HCT116 (cell line): ENCODE measurements at regions of chr2 and their contacts with region 1.

Region 1: DNA sequence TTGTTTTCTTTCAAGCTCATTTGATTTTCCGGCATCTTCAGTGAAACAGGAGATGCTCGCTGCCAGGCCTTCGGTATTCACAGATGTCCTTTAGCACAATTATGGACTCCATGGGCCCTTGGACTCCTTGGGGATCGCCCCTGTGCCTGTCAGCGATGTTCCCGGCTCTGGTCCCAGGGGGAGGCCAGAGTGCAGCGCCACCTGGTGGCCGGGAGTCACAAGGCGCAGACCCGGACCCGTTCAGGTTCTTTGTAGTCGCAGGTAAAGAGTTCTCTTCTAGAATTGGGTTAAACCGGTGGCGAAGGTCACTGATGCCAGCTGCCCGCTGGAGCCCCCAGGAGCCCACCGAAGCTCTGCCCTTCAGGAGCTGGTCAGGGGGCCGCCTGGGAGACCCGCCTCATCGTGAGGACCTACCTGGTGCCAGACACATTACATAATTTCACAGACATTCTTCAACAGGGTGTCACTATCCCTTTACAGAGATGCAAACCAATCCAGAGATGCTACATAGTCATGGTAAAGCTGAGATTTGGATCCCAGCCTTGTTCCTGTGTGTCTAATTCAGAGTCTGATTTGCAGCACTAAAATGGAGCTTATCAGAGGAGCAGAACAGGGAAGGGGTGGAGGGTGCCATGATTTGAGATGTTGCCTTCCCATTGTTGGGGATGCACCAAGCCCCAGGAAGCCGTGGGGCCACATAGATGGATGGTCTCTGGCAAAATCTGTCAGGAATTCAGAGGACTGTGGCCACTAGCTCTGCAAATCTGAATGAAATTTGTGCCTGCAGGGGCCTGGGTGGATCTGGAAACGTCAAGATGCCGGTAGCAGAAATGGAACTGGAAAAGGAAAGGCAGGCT is 6.0 kb upstream of the INPP5D start:
- DNase-seq: peak; percentile 48
- ATAC-seq: peak; percentile 98
- H3K4me3 ChIP-seq: no peak overlapping the region
- H3K27ac ChIP-seq: no peak overlapping the region
- H3K4me1 ChIP-seq: peaks cover 2 to 16% of the 10 kb centered on the region in 2 experiments; a peak in 2 of 4 replicates
- H3K27me3 ChIP-seq: no peaks in the 10 kb centered on the region; the same call in 1 of the 2 replicates
- CTCF ChIP-seq: peak; percentile 92 to 98 (median 96)
- POLR2A ChIP-seq: no peak
- RAD21 ChIP-seq: peak; percentile 93

Region 2: DNA sequence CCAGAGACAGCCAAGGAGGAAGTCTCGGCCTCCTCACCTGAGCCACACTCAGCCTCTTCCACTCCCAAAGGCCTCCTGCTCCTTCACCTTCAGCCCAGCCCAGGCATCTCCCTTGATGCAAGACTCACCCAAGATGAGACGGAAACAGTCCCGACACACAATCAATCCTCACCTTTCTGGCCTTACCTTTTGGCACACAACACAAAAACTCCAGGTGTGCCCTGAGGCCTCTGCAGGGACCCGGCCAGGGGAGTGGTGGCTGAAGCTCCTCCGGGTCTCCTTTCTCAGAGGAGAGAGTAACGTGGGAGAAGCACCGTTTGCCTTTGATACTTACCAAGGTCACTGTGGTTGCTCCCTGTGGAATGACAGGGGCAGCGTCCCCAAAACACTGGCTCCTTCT is 444.5 kb before region 1 on chr2:
- CTCF ChIA-PET with region 1: interaction called, 3 read pairs
- POLR2A ChIA-PET with region 1: no interaction called
- RAD21 ChIA-PET with region 1: no interaction called
- intact Hi-C with region 1: loop called (anchors 5 kb)
- DNase-seq: no peak
- ATAC-seq: no peak
- H3K4me3 ChIP-seq: no peak overlapping the region
- H3K27ac ChIP-seq: no peak overlapping the region
- H3K4me1 ChIP-seq: peaks cover 0 to 8% of the 10 kb centered on the region in 2 experiments; a peak in 3 of 4 replicates
- H3K27me3 ChIP-seq: no peaks in the 10 kb centered on the region
- CTCF ChIP-seq: no peak
- POLR2A ChIP-seq: no peak
- RAD21 ChIP-seq: no peak

Region 3: DNA sequence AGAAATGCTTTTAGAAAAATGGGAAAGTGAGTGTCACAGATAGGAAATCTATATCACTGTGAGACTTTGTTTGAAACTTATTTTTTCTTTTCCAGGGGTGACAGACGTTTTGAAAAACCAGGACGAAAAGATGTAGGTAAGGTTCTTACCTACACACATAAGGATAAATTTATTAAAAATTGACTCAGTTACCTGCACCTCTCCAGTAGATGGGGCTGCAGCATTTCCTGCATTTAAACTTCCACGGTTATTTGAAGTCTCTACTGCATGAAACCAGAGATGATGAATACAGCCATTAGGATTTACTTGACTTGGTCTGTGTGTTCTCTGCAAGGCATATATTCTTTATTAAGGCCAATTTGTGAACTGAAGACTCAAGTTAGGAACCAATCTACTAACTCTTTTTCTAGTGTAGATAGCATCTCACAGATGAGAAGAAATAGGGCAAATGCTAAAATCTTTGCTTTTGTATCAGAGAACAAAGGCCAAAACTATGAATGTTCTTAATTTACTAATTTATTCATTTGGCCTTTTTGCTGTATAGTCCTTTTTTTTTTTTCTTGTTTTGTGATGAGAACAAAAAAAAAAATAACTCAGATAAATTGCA is 292.8 kb before region 1 on chr2:
- CTCF ChIA-PET with region 1: no interaction called
- POLR2A ChIA-PET with region 1: no interaction called
- RAD21 ChIA-PET with region 1: no interaction called
- intact Hi-C with region 1: loop called (anchors 2 kb)
- DNase-seq: peak; percentile 28
- ATAC-seq: peak; percentile 75
- H3K4me3 ChIP-seq: no peak overlapping the region
- H3K27ac ChIP-seq: no peak overlapping the region
- H3K4me1 ChIP-seq: no peaks in the 10 kb centered on the region
- H3K27me3 ChIP-seq: no peaks in the 10 kb centered on the region
- CTCF ChIP-seq: peak; percentile 42 to 74 (median 63); a peak in 5 of 6 replicates
- POLR2A ChIP-seq: no peak
- RAD21 ChIP-seq: peak; percentile 70

Region 4: DNA sequence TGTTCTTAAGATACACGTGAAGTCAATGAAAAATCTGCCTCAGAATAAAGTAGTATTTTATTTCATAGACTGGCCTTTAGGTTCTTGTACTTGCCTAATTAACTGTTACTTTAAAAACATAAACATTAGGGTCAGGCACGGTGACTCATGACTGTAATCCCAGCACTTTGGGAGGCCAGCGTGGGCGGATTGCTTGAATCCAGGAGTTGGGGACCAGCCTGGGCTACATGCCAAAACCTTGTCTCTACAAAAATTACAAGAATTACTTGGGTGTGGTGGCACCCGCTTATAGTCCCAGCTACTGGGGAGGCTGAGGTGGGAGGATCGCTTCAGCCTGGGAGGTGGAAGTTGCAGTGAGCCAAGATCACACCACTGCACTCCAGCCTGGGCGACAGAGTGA is 200.1 kb before region 1 on chr2:
- CTCF ChIA-PET with region 1: interaction called, 8 read pairs
- POLR2A ChIA-PET with region 1: no interaction called
- RAD21 ChIA-PET with region 1: no interaction called
- intact Hi-C with region 1: loop called (anchors 1 kb)
- DNase-seq: peak; percentile 78
- ATAC-seq: peak; percentile 58
- H3K4me3 ChIP-seq: peak overlapping the region in 1 of 2 experiments; percentile 41; a peak in 2 of 4 replicates
- H3K27ac ChIP-seq: peak overlapping the region; percentile 72; the same call in 1 of the 2 replicates
- H3K4me1 ChIP-seq: peaks cover 54 to 64% of the 10 kb centered on the region in 2 experiments
- H3K27me3 ChIP-seq: no peaks in the 10 kb centered on the region
- CTCF ChIP-seq: no peak
- POLR2A ChIP-seq: no peak
- RAD21 ChIP-seq: peak; percentile 28; the same call in 1 of the 2 replicates